Calu3 (cell line): ENCODE measurements at regions of chr15 and their contacts with region 1.

Region 1: DNA sequence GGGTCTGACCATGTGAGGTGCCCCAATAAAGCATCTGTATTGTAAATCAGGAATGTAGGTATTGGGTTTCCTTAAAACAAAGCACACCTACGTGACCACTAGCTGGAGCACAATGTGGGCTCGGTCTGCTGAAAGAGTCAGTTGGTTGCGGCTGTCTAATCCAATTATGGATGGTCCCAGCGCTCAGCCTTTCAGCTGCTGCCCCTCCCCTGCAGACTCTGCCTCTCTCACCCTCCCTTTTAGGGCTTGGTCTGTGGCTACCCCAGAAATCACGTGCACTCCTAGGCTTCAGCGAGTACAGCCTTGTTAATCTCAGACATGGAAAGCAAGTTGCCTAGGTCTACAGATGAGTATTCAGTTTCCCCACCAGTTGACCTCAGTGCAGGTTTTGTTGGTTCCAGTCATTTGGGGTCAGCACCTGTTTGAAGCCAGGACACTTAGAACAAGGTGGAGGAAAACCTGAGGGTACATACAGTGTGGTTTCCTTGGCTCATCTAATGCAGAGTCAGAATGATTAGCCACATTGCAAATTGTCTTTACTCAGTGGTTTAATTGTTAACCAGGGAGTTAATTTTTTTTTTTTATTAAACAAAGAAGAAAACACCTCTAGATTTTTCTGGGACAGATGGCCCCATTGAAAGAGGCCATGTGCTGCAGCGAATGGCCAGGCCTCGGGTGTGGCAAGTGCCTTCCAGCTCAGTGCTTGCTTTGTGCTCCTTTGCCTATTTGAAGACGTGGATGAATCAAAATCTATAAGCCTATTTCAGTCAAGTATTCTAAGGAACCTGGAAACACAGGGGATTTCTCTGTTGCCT is 137.7 kb downstream of the IGF1R start:
- DNase-seq: peak; percentile 70
- H3K4me3 Mint-ChIP-seq: peak overlapping the region; percentile 54
- H3K27ac Mint-ChIP-seq: peak overlapping the region; percentile 83
- H3K4me1 Mint-ChIP-seq: peaks cover 65% of the 10 kb centered on the region
- H3K27me3 Mint-ChIP-seq: no peaks in the 10 kb centered on the region
- CTCF ChIP-seq: no peak

Region 2: GRCh38 chr15:98671060-98672008 is 114.7 kb before region 1 on chr15:
- CTCF ChIA-PET with region 1: no interaction called
- intact Hi-C with region 1: loop called (anchors 5 kb)
- DNase-seq: no peak
- H3K4me3 Mint-ChIP-seq: no peak overlapping the region
- H3K27ac Mint-ChIP-seq: no peak overlapping the region
- H3K4me1 Mint-ChIP-seq: peaks cover 61% of the 10 kb centered on the region
- H3K27me3 Mint-ChIP-seq: no peaks in the 10 kb centered on the region
- CTCF ChIP-seq: no peak

Region 3: DNA sequence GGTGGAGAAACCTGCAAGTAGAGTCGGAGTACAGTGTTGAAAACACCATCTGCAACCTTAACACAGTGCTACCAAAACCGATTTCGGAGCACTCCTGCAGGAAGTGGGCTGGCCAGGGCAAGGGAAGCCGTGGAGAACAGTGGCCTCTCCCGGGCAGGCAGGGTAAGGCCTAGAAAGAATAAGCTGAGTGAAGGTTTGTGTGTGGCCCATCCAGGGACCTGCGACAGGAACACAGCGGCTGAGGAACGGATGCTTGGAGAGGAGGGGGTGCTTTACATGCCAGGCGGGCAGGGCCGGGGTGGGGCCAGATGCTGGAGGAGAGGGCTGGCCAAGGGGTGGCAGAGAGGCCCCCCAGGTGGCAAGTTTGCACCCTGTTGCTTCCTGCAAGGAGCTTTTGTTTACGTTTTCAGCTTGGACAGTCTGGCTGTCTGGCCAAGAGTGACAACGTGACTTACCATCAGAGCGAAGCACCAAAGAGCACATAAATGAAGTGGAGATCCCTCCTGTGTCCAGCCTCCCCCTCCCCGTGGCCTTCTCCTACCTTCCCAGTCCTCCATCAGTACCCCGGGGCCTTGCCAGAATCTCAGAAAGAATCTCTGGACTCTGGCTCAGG is 65.1 kb after region 1 on chr15:
- CTCF ChIA-PET with region 1: interaction called, 15 read pairs
- intact Hi-C with region 1: no loop called
- DNase-seq: peak; percentile 87
- H3K4me3 Mint-ChIP-seq: peak overlapping the region; percentile 94
- H3K27ac Mint-ChIP-seq: peak overlapping the region; percentile 81
- H3K4me1 Mint-ChIP-seq: peaks cover 51% of the 10 kb centered on the region
- H3K27me3 Mint-ChIP-seq: no peaks in the 10 kb centered on the region
- CTCF ChIP-seq: peak; percentile 69

Region 4: DNA sequence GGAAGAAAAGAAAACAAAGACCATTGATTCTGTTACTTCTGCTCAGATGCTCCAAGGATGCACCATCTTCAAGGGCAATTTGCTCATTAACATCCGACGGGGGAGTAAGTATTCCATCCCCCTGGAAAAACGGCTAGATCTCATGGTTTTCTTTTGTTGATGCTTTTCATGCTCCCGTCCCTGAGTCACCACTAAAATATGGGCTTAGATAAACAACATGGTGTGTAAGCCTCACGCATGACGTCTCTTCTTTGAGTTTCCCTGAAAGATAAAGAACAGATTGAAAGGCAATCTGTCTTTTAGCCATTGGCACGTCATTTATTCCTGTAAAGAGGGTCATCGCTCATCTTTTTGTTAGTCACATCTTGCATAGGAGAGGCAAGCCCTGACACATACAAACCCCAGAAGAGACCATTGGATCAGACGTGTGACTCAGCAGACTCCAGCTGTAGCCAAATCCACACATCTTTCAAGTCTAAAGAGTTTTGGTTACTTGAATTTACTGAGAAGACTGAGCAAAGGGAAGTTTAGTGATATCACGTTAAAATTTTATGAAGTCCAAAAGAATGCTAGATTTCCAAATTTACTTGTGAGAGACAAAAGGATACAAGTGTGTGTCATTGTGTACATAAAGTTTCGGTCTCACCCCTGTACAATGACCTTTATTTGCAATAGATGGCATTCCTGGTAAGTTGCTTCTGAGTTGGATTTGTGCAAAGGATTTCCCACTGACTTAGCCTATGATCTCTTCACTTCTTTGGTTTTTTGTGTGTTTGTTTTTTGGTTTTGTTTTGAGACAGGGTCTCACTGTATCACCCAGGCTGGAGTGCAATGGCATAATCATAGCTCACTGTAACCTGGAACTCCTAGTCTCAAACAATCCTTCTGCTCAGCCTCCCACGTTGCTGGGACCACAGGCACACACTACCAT is 111.1 kb after region 1 on chr15:
- CTCF ChIA-PET with region 1: no interaction called
- intact Hi-C with region 1: loop called (anchors 5 kb)
- DNase-seq: peak; percentile 49
- H3K4me3 Mint-ChIP-seq: peak overlapping the region; percentile 56
- H3K27ac Mint-ChIP-seq: peak overlapping the region; percentile 95
- H3K4me1 Mint-ChIP-seq: peaks cover 24% of the 10 kb centered on the region
- H3K27me3 Mint-ChIP-seq: no peaks in the 10 kb centered on the region
- CTCF ChIP-seq: no peak

Region 5: GRCh38 chr15:98955366-98955765 is 169.4 kb after region 1 on chr15:
- CTCF ChIA-PET with region 1: no interaction called
- intact Hi-C with region 1: no loop called
- DNase-seq: no peak
- H3K4me3 Mint-ChIP-seq: no peak overlapping the region
- H3K27ac Mint-ChIP-seq: no peak overlapping the region
- H3K4me1 Mint-ChIP-seq: no peaks in the 10 kb centered on the region
- H3K27me3 Mint-ChIP-seq: no peaks in the 10 kb centered on the region
- CTCF ChIP-seq: no peak